ENCODE measurements at regions of chr6 and their contacts with region 1.

Region 1: DNA sequence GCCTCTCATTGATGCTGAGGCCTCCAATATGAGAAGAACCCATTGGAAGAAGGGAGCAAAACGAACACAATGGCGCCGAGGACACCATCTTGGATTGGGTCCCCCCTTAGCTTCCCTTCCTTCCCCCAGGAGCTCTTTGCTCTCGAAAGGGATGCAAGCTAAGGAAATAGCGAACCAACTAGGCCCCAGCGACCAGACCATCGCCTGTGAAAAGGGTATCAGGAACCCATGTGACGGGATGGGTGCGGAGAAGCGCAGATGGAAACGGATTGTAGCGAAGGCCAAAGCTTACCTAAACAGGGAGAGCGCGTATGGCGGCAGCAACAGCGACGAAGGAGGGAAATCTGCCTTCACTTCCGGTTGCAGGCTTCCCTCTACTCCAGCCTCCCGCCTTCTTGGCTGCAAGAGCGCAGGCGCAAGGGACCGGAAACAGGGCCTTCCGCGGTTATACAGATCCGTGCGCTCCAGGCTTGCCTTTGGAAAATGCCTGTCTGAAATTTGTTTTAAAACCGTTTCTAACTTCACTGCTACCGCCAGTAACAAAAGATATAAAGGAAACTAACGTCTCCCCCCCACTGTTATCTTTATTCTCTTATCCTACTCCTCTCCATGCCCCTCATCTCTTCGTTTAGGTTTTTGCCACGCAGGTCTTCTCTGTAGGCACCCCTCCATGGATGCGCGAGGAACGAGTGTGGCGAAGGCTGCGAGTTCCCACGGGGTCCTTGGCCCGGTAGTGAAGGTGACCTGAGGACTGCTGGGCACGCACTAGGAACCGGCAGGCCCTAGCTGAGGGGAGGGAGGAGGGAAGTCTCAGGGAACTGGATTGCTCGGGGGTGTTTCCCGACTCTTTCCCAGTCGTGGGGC is at the start of gene DDX39B:
- DNase-seq: peak; percentile 98
- H3K4me3 ChIP-seq: peak within 1 kb of the TSS; percentile 77
- H3K27ac ChIP-seq: peak within 1 kb of the TSS; percentile 83
- H3K4me1 ChIP-seq: peaks cover 58% of the 10 kb centered on the region
- CTCF ChIP-seq: no peak
- total RNA-seq, gene DDX39B: 736 and 747 TPM in 2 replicates

Region 2: GRCh38 chr6:31403283-31403989 is 138.5 kb before region 1 on chr6 and contains the start of gene MICA:
- CTCF ChIA-PET with region 1: no interaction called
- POLR2A ChIA-PET with region 1: no interaction called
- intact Hi-C with region 1: loop called (anchors 5 kb)
- DNase-seq: peak; percentile 73
- H3K4me3 ChIP-seq: peak within 1 kb of the TSS; percentile 79
- H3K27ac ChIP-seq: peak within 1 kb of the TSS; percentile 50
- H3K4me1 ChIP-seq: peaks cover 25% of the 10 kb centered on the region
- CTCF ChIP-seq: no peak
- total RNA-seq, gene MICA: 11.9 and 15.3 TPM in 2 replicates

Region 3: GRCh38 chr6:31493875-31494694 is 47.8 kb before region 1 on chr6:
- CTCF ChIA-PET with region 1: no interaction called
- POLR2A ChIA-PET with region 1: interaction called, 20 read pairs
- intact Hi-C with region 1: loop called (anchors 1 kb)
- DNase-seq: peak; percentile 88
- H3K4me3 ChIP-seq: peak overlapping the region; percentile 82
- H3K27ac ChIP-seq: peak overlapping the region; percentile 78
- H3K4me1 ChIP-seq: peaks cover 35% of the 10 kb centered on the region
- CTCF ChIP-seq: peak; percentile 95

Region 4: GRCh38 chr6:31652925-31653718 is 111.2 kb after region 1 on chr6:
- CTCF ChIA-PET with region 1: no interaction called
- POLR2A ChIA-PET with region 1: interaction called, 19 read pairs
- intact Hi-C with region 1: loop called (anchors 1 kb)
- DNase-seq: peak; percentile 97
- H3K4me3 ChIP-seq: peak overlapping the region; percentile 76
- H3K27ac ChIP-seq: peak overlapping the region; percentile 75
- H3K4me1 ChIP-seq: peaks cover 19% of the 10 kb centered on the region
- CTCF ChIP-seq: peak; percentile 59

Region 5: GRCh38 chr6:31795616-31796298 is 253.9 kb after region 1 on chr6 and contains the start of gene VARS1:
- CTCF ChIA-PET with region 1: no interaction called
- POLR2A ChIA-PET with region 1: no interaction called
- intact Hi-C with region 1: loop called (anchors 10 kb)
- DNase-seq: peak; percentile 92
- H3K4me3 ChIP-seq: peak within 1 kb of the TSS; percentile 90
- H3K27ac ChIP-seq: peak within 1 kb of the TSS; percentile 71
- H3K4me1 ChIP-seq: peaks cover 49% of the 10 kb centered on the region
- CTCF ChIP-seq: peak; percentile 74
- total RNA-seq, gene VARS1: 47.0 and 51.2 TPM in 2 replicates

Region 6: GRCh38 chr6:31862344-31863227 is 320.7 kb after region 1 on chr6 and contains the start of gene NEU1:
- CTCF ChIA-PET with region 1: no interaction called
- POLR2A ChIA-PET with region 1: no interaction called
- intact Hi-C with region 1: loop called (anchors 1 kb)
- DNase-seq: peak; percentile 100
- H3K4me3 ChIP-seq: peak within 1 kb of the TSS; percentile 75
- H3K27ac ChIP-seq: peak within 1 kb of the TSS; percentile 74
- H3K4me1 ChIP-seq: peaks cover 20% of the 10 kb centered on the region
- CTCF ChIP-seq: no peak
- total RNA-seq, gene NEU1: 5.5 and 7.0 TPM in 2 replicates